ENCODE measurements at regions of chr4 and their contacts with region 1.

Region 1: DNA sequence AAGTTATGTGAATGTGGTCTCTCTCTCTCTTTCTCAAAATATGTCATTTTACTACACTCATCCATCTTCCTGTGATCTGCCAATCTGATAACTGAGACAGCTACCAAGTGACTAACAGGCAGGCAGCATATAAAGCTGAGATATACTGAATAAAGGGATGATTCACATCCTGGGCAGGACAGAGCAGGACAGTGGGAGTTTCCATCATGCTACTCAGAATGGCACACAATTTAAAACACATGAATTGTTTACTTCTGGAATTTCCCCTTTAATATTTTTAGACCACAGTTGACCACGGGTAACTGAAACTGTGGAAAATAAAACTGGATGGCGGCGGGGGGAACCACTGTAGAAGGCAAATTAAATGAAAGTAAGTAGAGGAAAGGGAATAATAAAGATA is 58.6 kb upstream of the DCTD start:
- DNase-seq: peak; percentile 10
- H3K4me3 Mint-ChIP-seq: peak overlapping the region; percentile 41
- H3K27ac Mint-ChIP-seq: peak overlapping the region; percentile 92
- H3K4me1 Mint-ChIP-seq: peaks cover 27% of the 10 kb centered on the region
- H3K27me3 Mint-ChIP-seq: peaks cover 5% of the 10 kb centered on the region

Region 2: DNA sequence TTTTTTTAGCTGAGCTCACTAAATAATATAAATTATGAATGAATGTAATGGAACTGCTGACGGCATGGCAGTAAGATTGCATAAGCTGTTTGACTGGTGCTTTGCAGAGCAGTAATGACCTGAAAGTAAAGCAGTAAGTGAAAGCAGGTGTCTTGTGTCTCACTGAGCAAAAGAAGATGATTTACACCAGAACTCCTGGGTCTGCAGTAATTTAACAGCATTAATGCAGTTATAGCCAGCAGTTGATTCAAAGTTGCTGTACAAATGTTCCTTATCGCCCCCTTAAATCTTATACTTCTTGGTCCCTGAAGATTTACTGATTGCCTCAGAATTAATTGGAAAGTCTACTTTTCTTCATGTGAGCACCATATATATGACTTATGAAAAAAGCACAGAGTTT is 246.3 kb before region 1 on chr4:
- intact Hi-C with region 1: no loop called
- DNase-seq: no peak
- H3K4me3 Mint-ChIP-seq: no peak overlapping the region
- H3K27ac Mint-ChIP-seq: no peak overlapping the region
- H3K4me1 Mint-ChIP-seq: no peaks in the 10 kb centered on the region
- H3K27me3 Mint-ChIP-seq: no peaks in the 10 kb centered on the region

Region 3: GRCh38 chr4:182847576-182848450 is 128.0 kb before region 1 on chr4:
- intact Hi-C with region 1: no loop called
- DNase-seq: no peak
- H3K4me3 Mint-ChIP-seq: no peak overlapping the region
- H3K27ac Mint-ChIP-seq: no peak overlapping the region
- H3K4me1 Mint-ChIP-seq: no peaks in the 10 kb centered on the region
- H3K27me3 Mint-ChIP-seq: no peaks in the 10 kb centered on the region

Region 4: DNA sequence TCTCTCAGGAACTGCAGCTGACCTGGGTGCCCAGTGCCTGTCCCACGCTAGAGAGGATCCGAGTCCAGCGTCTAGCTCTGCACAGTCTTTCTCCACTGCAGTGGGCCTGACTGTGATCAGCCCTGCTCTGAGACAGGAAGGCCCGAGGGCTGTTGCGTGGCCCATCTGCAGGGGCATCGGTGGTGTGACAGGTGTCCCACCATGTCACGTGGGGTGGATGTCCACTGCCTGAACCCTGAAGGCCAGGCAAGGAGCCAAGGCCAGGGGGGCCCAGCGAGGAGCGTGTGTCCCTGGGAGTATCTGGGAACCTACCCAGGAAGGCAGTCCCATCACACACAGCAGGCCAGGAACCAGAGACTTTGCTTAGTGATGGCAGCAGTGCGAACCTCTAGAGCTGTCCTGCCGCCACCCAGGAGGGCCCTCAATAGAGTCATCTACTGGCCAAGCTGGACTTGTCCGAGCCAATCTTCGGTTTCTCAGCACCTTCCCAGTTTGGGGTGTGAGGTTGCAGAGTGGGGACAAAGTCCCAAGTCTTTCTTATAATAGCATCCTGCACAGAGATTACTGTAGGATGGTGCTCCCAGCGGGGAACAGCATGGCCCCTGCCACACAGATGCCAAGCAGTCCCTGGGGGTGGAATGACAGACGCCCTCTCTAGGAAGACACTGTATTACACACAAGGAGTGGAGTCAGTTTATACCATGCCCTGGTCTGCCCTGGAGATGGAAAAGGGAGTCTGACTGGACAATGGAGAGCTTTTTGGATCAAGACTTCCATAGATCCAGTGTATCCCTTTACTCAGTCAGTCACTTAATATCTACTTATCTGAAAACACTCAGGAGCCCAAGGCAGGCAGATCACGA is 96.9 kb before region 1 on chr4:
- intact Hi-C with region 1: no loop called
- DNase-seq: no peak
- H3K4me3 Mint-ChIP-seq: no peak overlapping the region
- H3K27ac Mint-ChIP-seq: no peak overlapping the region
- H3K4me1 Mint-ChIP-seq: no peaks in the 10 kb centered on the region
- H3K27me3 Mint-ChIP-seq: no peaks in the 10 kb centered on the region

Region 5: GRCh38 chr4:183185018-183185417 is 209.2 kb after region 1 on chr4:
- intact Hi-C with region 1: loop called (anchors 2 kb)
- DNase-seq: peak; percentile 12
- H3K4me3 Mint-ChIP-seq: no peak overlapping the region
- H3K27ac Mint-ChIP-seq: no peak overlapping the region
- H3K4me1 Mint-ChIP-seq: peaks cover 18% of the 10 kb centered on the region
- H3K27me3 Mint-ChIP-seq: peaks cover 56% of the 10 kb centered on the region

Measured in activated T-helper 2 cell treated with anti-CD3 and anti-CD28 coated beads, Interferon-gamma antibody, Interleukin-2, Interleukin-4, amounts not matched to agents 10 μg/mL and 5 μg/mL and 100 μg/mL, durations not matched to agents 14 hours and 24 hours and 36 hours (primary cell).